ENCODE measurements at regions of chr13 and their contacts with region 1.

Region 1: GRCh38 chr13:76293346-76293745 is 592.9 kb downstream of the KCTD12 start:
- DNase-seq: no peak
- ATAC-seq: no peak
- H3K4me3 ChIP-seq: no peak overlapping the region
- H3K27ac ChIP-seq: no peak overlapping the region
- H3K4me1 ChIP-seq: no peaks in the 10 kb centered on the region
- H3K27me3 ChIP-seq: no peaks in the 10 kb centered on the region
- CTCF ChIP-seq: no peak
- POLR2A ChIP-seq: no peak
- RAD21 ChIP-seq: no peak

Region 2: GRCh38 chr13:76329004-76329403 is 35.7 kb after region 1 on chr13:
- CTCF ChIA-PET with region 1: no interaction called
- POLR2A ChIA-PET with region 1: no interaction called
- RAD21 ChIA-PET with region 1: no interaction called
- intact Hi-C with region 1: loop called (anchors 5 kb)
- DNase-seq: no peak
- ATAC-seq: no peak
- H3K4me3 ChIP-seq: no peak overlapping the region
- H3K27ac ChIP-seq: no peak overlapping the region
- H3K4me1 ChIP-seq: no peaks in the 10 kb centered on the region
- H3K27me3 ChIP-seq: no peaks in the 10 kb centered on the region
- CTCF ChIP-seq: no peak
- POLR2A ChIP-seq: no peak
- RAD21 ChIP-seq: no peak

Region 3: GRCh38 chr13:76610819-76611415 is 317.6 kb after region 1 on chr13:
- CTCF ChIA-PET with region 1: no interaction called
- POLR2A ChIA-PET with region 1: no interaction called
- RAD21 ChIA-PET with region 1: no interaction called
- intact Hi-C with region 1: no loop called
- DNase-seq: no peak
- ATAC-seq: no peak
- H3K4me3 ChIP-seq: no peak overlapping the region
- H3K27ac ChIP-seq: no peak overlapping the region
- H3K4me1 ChIP-seq: no peaks in the 10 kb centered on the region
- H3K27me3 ChIP-seq: no peaks in the 10 kb centered on the region
- CTCF ChIP-seq: no peak
- POLR2A ChIP-seq: no peak
- RAD21 ChIP-seq: no peak